Mammary epithelial cell (primary cell): ENCODE measurements at regions of chr6 and their contacts with region 1.

Region 1: GRCh38 chr6:103122766-103123601 is 1729.5 kb downstream of the GRIK2 start:
- DNase-seq: peak; percentile 25
- H3K4me3 ChIP-seq: no peak overlapping the region
- H3K27ac ChIP-seq: no peak overlapping the region
- H3K4me1 ChIP-seq: no peaks in the 10 kb centered on the region
- H3K27me3 ChIP-seq: no peaks in the 10 kb centered on the region
- CTCF ChIP-seq: peak; percentile 63 to 80

Region 2: DNA sequence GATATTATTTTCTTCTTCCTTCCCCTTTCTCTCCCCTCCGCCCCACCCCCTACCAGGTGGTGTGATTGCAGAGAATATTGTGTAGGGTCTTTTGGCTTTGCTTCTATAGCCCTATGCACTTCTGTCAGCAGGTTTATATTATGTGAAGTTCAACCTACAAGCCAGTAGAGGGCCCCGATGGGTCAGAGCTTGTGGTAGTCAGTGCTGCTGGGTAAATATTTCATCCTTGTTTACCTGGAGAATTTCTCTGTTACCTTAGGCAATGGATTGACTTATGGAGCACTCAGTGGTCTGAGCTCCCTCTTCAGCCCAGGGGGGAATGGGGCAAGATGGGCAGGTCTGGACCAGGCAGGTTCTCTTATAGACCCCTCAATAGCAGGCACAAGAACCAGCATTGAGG is 1008.6 kb before region 1 on chr6:
- CTCF ChIA-PET with region 1: no interaction called
- dilution Hi-C with region 1: no loop called
- in situ Hi-C with region 1: no loop called
- intact Hi-C with region 1: loop called (anchors 10 kb)
- DNase-seq: peak; percentile 3
- H3K4me3 ChIP-seq: no peak overlapping the region
- H3K27ac ChIP-seq: no peak overlapping the region
- H3K4me1 ChIP-seq: no peaks in the 10 kb centered on the region
- H3K27me3 ChIP-seq: no peaks in the 10 kb centered on the region
- CTCF ChIP-seq: peak; percentile 43 to 64

Region 3: GRCh38 chr6:102853269-102853955 is 269.6 kb before region 1 on chr6:
- CTCF ChIA-PET with region 1: no interaction called
- dilution Hi-C with region 1: no loop called
- in situ Hi-C with region 1: no loop called
- intact Hi-C with region 1: loop called (anchors 1 kb)
- DNase-seq: no peak
- H3K4me3 ChIP-seq: no peak overlapping the region
- H3K27ac ChIP-seq: no peak overlapping the region
- H3K4me1 ChIP-seq: no peaks in the 10 kb centered on the region
- H3K27me3 ChIP-seq: no peaks in the 10 kb centered on the region
- CTCF ChIP-seq: no peak